H1 (cell line): ENCODE measurements at regions of chr19 and their contacts with region 1.

Region 1: GRCh38 chr19:41837981-41838708 is 6.3 kb downstream of the LYPD4 start:
- DNase-seq: no peak
- H3K4me3 ChIP-seq: no peak overlapping the region
- H3K27ac ChIP-seq: no peak overlapping the region
- H3K4me1 ChIP-seq: no peaks in the 10 kb centered on the region
- H3K27me3 ChIP-seq: no peaks in the 10 kb centered on the region
- CTCF ChIP-seq: no peak
- EP300 ChIP-seq: no peak
- POLR2A ChIP-seq: no peak
- RAD21 ChIP-seq: no peak

Region 2: GRCh38 chr19:41771410-41771809 is 66.7 kb before region 1 on chr19:
- CTCF ChIA-PET with region 1: no interaction called
- POLR2A ChIA-PET with region 1: no interaction called
- DNase-seq: no peak
- H3K4me3 ChIP-seq: no peak overlapping the region
- H3K27ac ChIP-seq: no peak overlapping the region
- H3K4me1 ChIP-seq: no peaks in the 10 kb centered on the region
- H3K27me3 ChIP-seq: peaks cover 0 to 1% (median 0%) of the 10 kb centered on the region in 4 experiments; a peak in 1 of 7 replicates
- CTCF ChIP-seq: no peak
- EP300 ChIP-seq: no peak
- POLR2A ChIP-seq: no peak
- RAD21 ChIP-seq: no peak

Region 3: DNA sequence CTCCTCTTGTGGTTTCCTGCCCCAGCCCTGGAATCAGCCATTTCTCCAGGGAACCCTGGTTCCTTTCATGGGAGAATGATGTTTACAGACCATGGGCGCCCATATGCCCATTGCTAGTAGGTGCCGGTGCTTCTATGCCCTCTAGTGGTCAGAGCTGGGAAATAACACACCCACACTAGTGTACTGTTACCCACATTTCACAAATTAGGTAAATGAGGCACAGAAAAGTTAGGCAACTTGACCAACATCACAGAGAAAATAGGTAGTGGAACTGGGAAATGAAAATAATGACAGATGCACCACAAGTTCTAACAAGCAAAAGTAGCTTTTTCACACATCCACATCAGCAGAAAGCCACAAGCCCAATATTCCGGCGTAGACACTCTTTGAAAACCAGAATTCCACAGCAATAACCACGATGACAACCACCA is 43.1 kb before region 1 on chr19:
- CTCF ChIA-PET with region 1: interaction called, 13 read pairs
- POLR2A ChIA-PET with region 1: no interaction called
- DNase-seq: peak; percentile 3 to 66
- H3K4me3 ChIP-seq: no peak overlapping the region
- H3K27ac ChIP-seq: no peak overlapping the region
- H3K4me1 ChIP-seq: no peaks in the 10 kb centered on the region
- H3K27me3 ChIP-seq: no peaks in the 10 kb centered on the region; a peak in 1 of 7 replicates
- CTCF ChIP-seq: peak; percentile 43 to 67 (median 54)
- EP300 ChIP-seq: no peak
- POLR2A ChIP-seq: no peak
- RAD21 ChIP-seq: peak; percentile 22 to 30; a peak in 3 of 4 replicates

Region 4: GRCh38 chr19:41821003-41821735 is 17.0 kb before region 1 on chr19:
- CTCF ChIA-PET with region 1: interaction called, 14 read pairs
- POLR2A ChIA-PET with region 1: no interaction called
- DNase-seq: peak; percentile 27 to 50
- H3K4me3 ChIP-seq: no peak overlapping the region
- H3K27ac ChIP-seq: no peak overlapping the region
- H3K4me1 ChIP-seq: no peaks in the 10 kb centered on the region
- H3K27me3 ChIP-seq: no peaks in the 10 kb centered on the region
- CTCF ChIP-seq: peak in 2 of 3 experiments; percentile 57 to 73; a peak in 3 of 4 replicates
- EP300 ChIP-seq: no peak
- POLR2A ChIP-seq: no peak
- RAD21 ChIP-seq: peak; percentile 75 to 81

Region 5: DNA sequence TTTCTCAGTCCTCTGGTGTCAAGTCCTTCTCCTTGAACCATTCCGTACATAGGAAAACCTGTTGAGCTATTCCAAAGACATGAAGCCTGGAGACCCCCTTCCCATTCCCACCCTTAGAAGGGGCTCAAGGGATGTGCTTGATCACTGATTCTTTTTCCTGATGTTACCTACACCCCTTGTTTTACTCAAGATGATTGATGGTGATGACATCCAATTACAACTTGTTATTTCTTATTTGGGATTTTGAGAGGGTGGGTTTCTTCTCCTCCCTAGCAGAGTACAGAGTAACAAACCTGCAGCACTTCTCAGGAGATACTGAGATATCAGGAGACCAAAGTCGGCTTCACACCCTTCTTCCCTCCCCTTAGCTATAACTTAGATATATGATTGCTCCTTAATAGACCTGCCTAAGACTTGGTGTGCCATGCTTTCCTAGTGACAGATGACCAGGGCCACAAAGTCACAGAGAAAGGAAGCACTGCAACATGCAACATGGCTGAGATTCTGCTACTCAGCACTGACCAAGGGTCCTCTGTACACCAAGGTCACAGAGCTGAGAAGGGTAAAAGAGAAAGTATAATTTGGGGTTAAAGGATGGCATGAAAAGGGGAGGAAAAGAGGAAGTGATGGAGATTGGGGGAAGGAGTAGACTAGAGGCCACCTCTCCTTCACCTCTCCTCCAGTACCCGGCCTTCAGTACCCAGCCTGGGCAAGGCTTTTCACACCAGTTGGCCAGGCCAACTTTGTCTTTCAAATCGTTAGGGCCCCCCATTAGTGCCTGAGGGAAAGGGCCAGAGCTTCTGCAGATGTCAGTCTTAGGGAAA is 15.4 kb after region 1 on chr19:
- CTCF ChIA-PET with region 1: interaction called, 31 read pairs
- POLR2A ChIA-PET with region 1: interaction called, 4 read pairs
- DNase-seq: no peak
- H3K4me3 ChIP-seq: no peak overlapping the region
- H3K27ac ChIP-seq: no peak overlapping the region
- H3K4me1 ChIP-seq: no peaks in the 10 kb centered on the region; a peak in 1 of 7 replicates
- H3K27me3 ChIP-seq: no peaks in the 10 kb centered on the region
- CTCF ChIP-seq: no peak
- EP300 ChIP-seq: no peak
- POLR2A ChIP-seq: no peak
- RAD21 ChIP-seq: no peak